PC-9 (cell line): ENCODE measurements at regions of chr14 and their contacts with region 1.

Region 1: GRCh38 chr14:92564319-92565019 is 50.9 kb downstream of the RIN3 start:
- DNase-seq: no peak
- H3K4me3 ChIP-seq: no peak overlapping the region
- H3K27ac ChIP-seq: peak overlapping the region; percentile 87
- H3K4me1 ChIP-seq: peaks cover 52% of the 10 kb centered on the region
- H3K27me3 ChIP-seq: no peaks in the 10 kb centered on the region
- CTCF ChIP-seq: no peak

Region 2: GRCh38 chr14:92217936-92218335 is 346.5 kb before region 1 on chr14:
- CTCF ChIA-PET with region 1: no interaction called
- POLR2A ChIA-PET with region 1: interaction called, 14 read pairs
- intact Hi-C with region 1: no loop called
- DNase-seq: no peak
- H3K4me3 ChIP-seq: no peak overlapping the region
- H3K27ac ChIP-seq: no peak overlapping the region
- H3K4me1 ChIP-seq: no peaks in the 10 kb centered on the region
- H3K27me3 ChIP-seq: no peaks in the 10 kb centered on the region; the same call in 1 of the 2 replicates
- CTCF ChIP-seq: no peak

Region 3: GRCh38 chr14:92637228-92637627 is 72.8 kb after region 1 on chr14:
- CTCF ChIA-PET with region 1: no interaction called
- POLR2A ChIA-PET with region 1: no interaction called
- intact Hi-C with region 1: no loop called
- DNase-seq: no peak
- H3K4me3 ChIP-seq: no peak overlapping the region
- H3K27ac ChIP-seq: no peak overlapping the region
- H3K4me1 ChIP-seq: no peaks in the 10 kb centered on the region; the same call in 1 of the 2 replicates
- H3K27me3 ChIP-seq: no peaks in the 10 kb centered on the region
- CTCF ChIP-seq: no peak